Activated naive CD4-positive, alpha-beta T cell treated with anti-CD3 and anti-CD28 coated beads for 36 hours (primary cell): ENCODE measurements at regions of chr17 and their contacts with region 1.

Region 1: DNA sequence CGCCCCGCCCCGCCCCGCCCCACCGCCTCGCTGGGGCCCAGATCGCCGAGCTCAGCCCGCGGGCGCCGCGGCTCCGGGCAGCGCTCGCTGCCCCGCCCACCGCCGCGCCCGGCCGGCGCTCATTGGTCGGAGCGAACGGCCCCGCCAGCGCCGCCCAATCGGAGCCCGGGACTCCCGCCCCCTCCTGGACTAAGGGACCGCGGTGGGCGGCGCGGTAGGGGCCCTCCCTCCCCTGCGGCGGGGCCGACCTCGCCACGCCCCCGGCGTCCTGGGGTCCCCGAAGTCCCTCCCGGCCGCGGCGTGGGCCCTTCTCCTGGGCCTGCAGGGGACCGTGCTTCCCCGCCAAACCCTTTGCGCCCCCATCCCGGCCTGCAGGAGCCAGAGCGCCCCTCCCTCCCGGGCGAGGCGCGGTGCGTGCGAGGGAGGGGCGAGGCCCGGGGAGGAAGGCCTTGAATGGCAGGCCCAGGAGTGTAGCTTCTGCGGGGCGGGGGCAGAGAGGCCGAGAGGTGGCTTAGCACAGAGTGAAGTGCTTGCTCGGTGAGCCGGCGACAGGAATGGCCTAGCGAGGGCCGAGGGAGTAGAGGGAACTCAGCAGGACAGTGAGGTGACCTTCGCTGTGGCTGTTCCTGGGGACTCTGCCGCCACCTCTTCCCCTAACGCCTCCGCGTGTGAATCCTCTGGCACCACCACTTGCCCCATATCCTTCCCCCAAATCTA is at the start of gene CAMKK1:
- DNase-seq: peak; percentile 88
- H3K4me3 Mint-ChIP-seq: peak within 1 kb of the TSS; percentile 78
- H3K27ac Mint-ChIP-seq: peak within 1 kb of the TSS; percentile 65
- H3K4me1 Mint-ChIP-seq: peaks cover 31% of the 10 kb centered on the region
- H3K27me3 Mint-ChIP-seq: no peaks in the 10 kb centered on the region
- total RNA-seq, gene CAMKK1: 2.4 to 2.7 TPM

Region 2: GRCh38 chr17:3636154-3636907 is 256.8 kb before region 1 on chr17 and contains the starts of genes CTNS and SHPK:
- CTCF ChIA-PET with region 1: no interaction called
- intact Hi-C with region 1: loop called (anchors 1 kb)
- DNase-seq: peak; percentile 95
- H3K4me3 Mint-ChIP-seq: peak within 1 kb of the TSS; percentile 95
- H3K27ac Mint-ChIP-seq: peak within 1 kb of the TSS; percentile 99
- H3K4me1 Mint-ChIP-seq: peaks cover 30% of the 10 kb centered on the region
- H3K27me3 Mint-ChIP-seq: no peaks in the 10 kb centered on the region
- total RNA-seq, gene CTNS: 4.5 TPM
- total RNA-seq, gene SHPK: 6.9 to 7.5 TPM

Region 3: GRCh38 chr17:4090898-4091297 is 197.7 kb after region 1 on chr17:
- CTCF ChIA-PET with region 1: no interaction called
- intact Hi-C with region 1: no loop called
- DNase-seq: no peak
- H3K4me3 Mint-ChIP-seq: no peak overlapping the region
- H3K27ac Mint-ChIP-seq: no peak overlapping the region
- H3K4me1 Mint-ChIP-seq: peaks cover 10% of the 10 kb centered on the region
- H3K27me3 Mint-ChIP-seq: no peaks in the 10 kb centered on the region

Region 4: GRCh38 chr17:4130715-4131114 is 237.6 kb after region 1 on chr17:
- CTCF ChIA-PET with region 1: no interaction called
- intact Hi-C with region 1: no loop called
- DNase-seq: no peak
- H3K4me3 Mint-ChIP-seq: no peak overlapping the region
- H3K27ac Mint-ChIP-seq: peak overlapping the region; percentile 9
- H3K4me1 Mint-ChIP-seq: peaks cover 48% of the 10 kb centered on the region
- H3K27me3 Mint-ChIP-seq: no peaks in the 10 kb centered on the region

Region 5: GRCh38 chr17:4220655-4221054 is 327.5 kb after region 1 on chr17:
- CTCF ChIA-PET with region 1: no interaction called
- intact Hi-C with region 1: no loop called
- DNase-seq: no peak
- H3K4me3 Mint-ChIP-seq: no peak overlapping the region
- H3K27ac Mint-ChIP-seq: no peak overlapping the region
- H3K4me1 Mint-ChIP-seq: peaks cover under 1% of the 10 kb centered on the region
- H3K27me3 Mint-ChIP-seq: no peaks in the 10 kb centered on the region